ENCODE measurements at regions of chr3 and their contacts with region 1.

Region 1: GRCh38 chr3:122055215-122055614 is at the start of gene CD86:
- DNase-seq: peak; percentile 70
- ATAC-seq: peak; percentile 82
- H3K4me3 ChIP-seq: peak within 1 kb of the TSS; percentile 30 to 70 (median 54)
- H3K4me3 Mint-ChIP-seq: peak within 1 kb of the TSS; percentile 83
- H3K27ac ChIP-seq: peak within 1 kb of the TSS in 1 of 2 donors; percentile 33
- H3K27ac Mint-ChIP-seq: peak within 1 kb of the TSS; percentile 70
- H3K4me1 ChIP-seq: peaks cover 24 to 26% of the 10 kb centered on the region in 2 donors
- H3K4me1 Mint-ChIP-seq: peaks cover 31% of the 10 kb centered on the region
- H3K27me3 ChIP-seq: no peaks in the 10 kb centered on the region
- H3K27me3 Mint-ChIP-seq: no peaks in the 10 kb centered on the region
- CTCF ChIP-seq: no peak
- total RNA-seq, gene CD86: 31.5 and 37.6 TPM in 2 replicates

Region 2: GRCh38 chr3:121995161-121996137 is 59.8 kb before region 1 on chr3:
- CTCF ChIA-PET with region 1: interaction called, 27 read pairs
- POLR2A ChIA-PET with region 1: no interaction called
- intact Hi-C with region 1: loop called (anchors 1 kb)
- DNase-seq: peak; percentile 82
- ATAC-seq: peak; percentile 84
- H3K4me3 ChIP-seq: peak overlapping the region in 2 of 5 experiments; percentile 23 to 29
- H3K4me3 Mint-ChIP-seq: peak overlapping the region; percentile 65
- H3K27ac ChIP-seq: peak overlapping the region; percentile 73 to 83
- H3K27ac Mint-ChIP-seq: peak overlapping the region; percentile 92
- H3K4me1 ChIP-seq: peaks cover 83 to 84% of the 10 kb centered on the region in 2 donors
- H3K4me1 Mint-ChIP-seq: peaks cover 84% of the 10 kb centered on the region
- H3K27me3 ChIP-seq: no peaks in the 10 kb centered on the region
- H3K27me3 Mint-ChIP-seq: no peaks in the 10 kb centered on the region
- CTCF ChIP-seq: no peak

Region 3: GRCh38 chr3:122014741-122015140 is 40.5 kb before region 1 on chr3:
- CTCF ChIA-PET with region 1: interaction called, 3 read pairs
- POLR2A ChIA-PET with region 1: no interaction called
- intact Hi-C with region 1: loop called (anchors 1 kb)
- DNase-seq: peak; percentile 67
- ATAC-seq: peak; percentile 97
- H3K4me3 ChIP-seq: no peak overlapping the region
- H3K4me3 Mint-ChIP-seq: no peak overlapping the region
- H3K27ac ChIP-seq: no peak overlapping the region
- H3K27ac Mint-ChIP-seq: no peak overlapping the region
- H3K4me1 ChIP-seq: peaks cover 8 to 12% of the 10 kb centered on the region in 2 donors
- H3K4me1 Mint-ChIP-seq: peaks cover 38% of the 10 kb centered on the region
- H3K27me3 ChIP-seq: no peaks in the 10 kb centered on the region
- H3K27me3 Mint-ChIP-seq: no peaks in the 10 kb centered on the region
- CTCF ChIP-seq: no peak

Region 4: GRCh38 chr3:122067588-122068240 is 12.5 kb after region 1 on chr3:
- CTCF ChIA-PET with region 1: interaction called, 13 read pairs
- POLR2A ChIA-PET with region 1: interaction called, 6 read pairs
- intact Hi-C with region 1: loop called (anchors 1 kb)
- DNase-seq: peak; percentile 44
- ATAC-seq: peak; percentile 46
- H3K4me3 ChIP-seq: peak overlapping the region in 2 of 5 experiments; percentile 20 to 45
- H3K4me3 Mint-ChIP-seq: peak overlapping the region; percentile 79
- H3K27ac ChIP-seq: peak overlapping the region; percentile 30 to 53
- H3K27ac Mint-ChIP-seq: peak overlapping the region; percentile 47
- H3K4me1 ChIP-seq: peaks cover 36 to 39% of the 10 kb centered on the region in 2 donors
- H3K4me1 Mint-ChIP-seq: peaks cover 53% of the 10 kb centered on the region
- H3K27me3 ChIP-seq: no peaks in the 10 kb centered on the region
- H3K27me3 Mint-ChIP-seq: no peaks in the 10 kb centered on the region
- CTCF ChIP-seq: no peak

Region 5: DNA sequence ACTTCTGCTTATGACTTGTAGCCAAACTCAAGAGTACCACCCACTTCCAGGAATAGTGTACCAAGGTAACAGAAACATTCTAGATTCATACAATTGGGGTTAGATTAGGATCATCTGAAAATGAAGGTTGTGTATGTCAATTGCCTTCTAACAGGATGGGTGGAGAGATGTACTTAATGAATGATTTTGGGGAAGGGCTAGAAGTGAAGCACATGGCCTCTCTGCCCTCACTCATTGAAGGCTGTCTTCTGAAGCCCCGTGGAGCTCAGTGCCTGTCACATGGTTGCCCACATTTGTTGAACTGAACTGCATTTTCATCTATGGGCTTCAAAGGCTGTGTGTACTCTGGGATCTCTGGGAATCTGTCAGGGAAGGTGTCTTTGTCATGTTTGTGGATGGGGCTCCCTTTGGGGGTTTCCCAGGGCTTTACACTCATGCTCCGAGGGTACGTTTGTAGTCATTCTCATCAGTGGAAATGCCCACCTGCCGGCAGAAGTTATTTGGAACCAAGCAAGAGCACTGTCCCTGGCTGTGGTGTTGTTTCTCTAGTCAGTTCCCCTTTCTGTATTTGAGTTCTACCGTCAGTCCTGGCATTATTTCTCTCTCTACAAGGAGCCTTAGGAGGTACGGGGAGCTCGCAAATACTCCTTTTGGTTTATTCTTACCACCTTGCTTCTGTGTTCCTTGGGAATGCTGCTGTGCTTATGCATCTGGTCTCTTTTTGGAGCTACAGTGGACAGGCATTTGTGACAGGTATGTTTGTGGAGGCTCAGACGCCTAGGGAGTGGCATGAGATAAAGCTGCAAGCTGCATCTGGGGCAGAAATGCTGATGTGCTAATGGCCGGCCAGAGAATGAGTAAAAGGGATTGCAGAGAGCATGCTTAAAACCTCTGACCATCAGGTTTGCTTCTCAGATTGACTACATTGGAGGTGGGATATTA is 22.3 kb after region 1 on chr3:
- CTCF ChIA-PET with region 1: interaction called, 6 read pairs
- POLR2A ChIA-PET with region 1: interaction called, 4 read pairs
- intact Hi-C with region 1: loop called (anchors 2 kb)
- DNase-seq: peak; percentile 77
- ATAC-seq: peak; percentile 72
- H3K4me3 ChIP-seq: peak overlapping the region; percentile 44 to 95 (median 76)
- H3K4me3 Mint-ChIP-seq: peak overlapping the region; percentile 94
- H3K27ac ChIP-seq: peak overlapping the region; percentile 64 to 81
- H3K27ac Mint-ChIP-seq: peak overlapping the region; percentile 96
- H3K4me1 ChIP-seq: peaks cover 76 to 83% of the 10 kb centered on the region in 2 donors
- H3K4me1 Mint-ChIP-seq: peaks cover 90% of the 10 kb centered on the region
- H3K27me3 ChIP-seq: no peaks in the 10 kb centered on the region
- H3K27me3 Mint-ChIP-seq: no peaks in the 10 kb centered on the region
- CTCF ChIP-seq: peak; percentile 33

Region 6: DNA sequence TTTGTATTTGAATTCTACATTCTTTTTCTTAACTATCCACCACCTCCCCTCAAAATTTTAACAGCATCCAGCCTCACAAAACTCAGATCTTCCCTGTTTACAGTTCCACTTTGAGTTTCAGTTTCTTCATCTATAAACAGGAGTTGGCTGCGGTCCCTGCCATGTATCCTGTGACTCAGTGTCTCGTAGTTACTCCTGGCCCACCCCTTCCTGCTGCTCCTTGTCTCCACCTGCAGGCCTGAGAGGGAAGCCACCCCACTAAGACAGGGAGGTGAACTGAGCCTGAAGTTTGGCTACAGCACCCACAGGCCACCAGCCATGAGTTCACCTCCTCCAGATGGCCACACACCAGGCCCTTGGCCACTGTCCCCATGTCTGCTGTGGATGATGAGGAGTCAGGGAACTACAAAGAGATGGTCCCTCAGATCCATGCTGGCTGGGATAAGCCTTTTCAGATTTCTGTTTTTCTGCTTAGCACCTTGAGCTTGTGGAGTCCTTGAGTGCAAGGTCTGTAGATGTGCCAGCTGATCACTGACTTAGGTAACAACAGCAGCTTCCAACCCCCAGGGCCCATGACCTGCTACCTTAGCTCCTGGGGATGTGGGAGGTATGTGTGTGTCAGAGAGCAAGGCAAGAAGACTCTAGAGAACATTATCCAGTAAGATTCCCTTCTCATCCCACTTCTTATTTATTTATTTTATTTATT is 37.4 kb after region 1 on chr3:
- CTCF ChIA-PET with region 1: no interaction called
- POLR2A ChIA-PET with region 1: no interaction called
- intact Hi-C with region 1: loop called (anchors 5 kb)
- DNase-seq: peak; percentile 40
- ATAC-seq: peak; percentile 34
- H3K4me3 ChIP-seq: no peak overlapping the region
- H3K4me3 Mint-ChIP-seq: peak overlapping the region; percentile 74
- H3K27ac ChIP-seq: peak overlapping the region in 1 of 2 donors; percentile 60
- H3K27ac Mint-ChIP-seq: peak overlapping the region; percentile 81
- H3K4me1 ChIP-seq: peaks cover 23 to 27% of the 10 kb centered on the region in 2 donors
- H3K4me1 Mint-ChIP-seq: peaks cover 37% of the 10 kb centered on the region
- H3K27me3 ChIP-seq: no peaks in the 10 kb centered on the region
- H3K27me3 Mint-ChIP-seq: no peaks in the 10 kb centered on the region
- CTCF ChIP-seq: peak; percentile 36

Region 7: DNA sequence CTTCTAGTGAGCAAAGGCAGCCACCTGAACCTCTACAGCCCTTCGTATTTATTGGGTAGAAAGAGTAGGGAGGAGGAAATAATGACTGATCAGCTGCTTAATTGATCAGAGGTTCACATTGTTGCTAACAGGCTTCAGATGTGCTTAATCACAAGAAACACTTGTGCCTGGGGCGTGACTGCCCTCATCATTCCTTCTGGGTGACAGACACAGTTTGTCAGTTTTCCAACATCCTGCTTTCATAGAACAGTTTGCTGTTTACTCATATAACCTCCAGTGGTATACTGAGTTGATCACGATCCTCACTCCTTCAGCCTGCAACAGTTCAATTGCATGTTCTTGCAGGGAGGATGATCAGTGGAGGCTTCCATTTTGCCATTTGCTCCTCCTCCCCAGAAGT is 114.7 kb after region 1 on chr3:
- CTCF ChIA-PET with region 1: no interaction called
- POLR2A ChIA-PET with region 1: no interaction called
- intact Hi-C with region 1: no loop called
- DNase-seq: no peak
- ATAC-seq: no peak
- H3K4me3 ChIP-seq: no peak overlapping the region
- H3K4me3 Mint-ChIP-seq: no peak overlapping the region
- H3K27ac ChIP-seq: no peak overlapping the region
- H3K27ac Mint-ChIP-seq: no peak overlapping the region
- H3K4me1 ChIP-seq: no peaks in the 10 kb centered on the region
- H3K4me1 Mint-ChIP-seq: no peaks in the 10 kb centered on the region
- H3K27me3 ChIP-seq: peaks cover 0 to 6% (median 0%) of the 10 kb centered on the region in 4 experiments
- H3K27me3 Mint-ChIP-seq: peaks cover 7% of the 10 kb centered on the region
- CTCF ChIP-seq: no peak

Region 8: DNA sequence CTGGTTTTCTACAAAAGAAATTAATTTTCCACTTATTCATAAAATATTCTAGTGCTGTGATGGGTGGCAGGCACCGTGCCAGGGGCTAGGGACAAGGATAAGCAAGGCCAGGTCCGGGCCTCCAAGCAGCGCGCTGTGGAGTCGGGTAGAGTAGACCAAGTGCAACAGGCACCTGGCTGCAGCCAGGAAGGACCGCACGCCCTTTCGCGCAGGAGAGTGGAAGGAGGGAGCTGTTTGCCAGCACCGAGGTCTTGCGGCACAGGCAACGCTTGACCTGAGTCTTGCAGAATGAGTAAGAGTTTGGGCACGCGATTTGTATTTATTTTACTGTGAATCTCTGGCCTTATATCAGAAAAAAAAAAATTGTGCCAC is 128.3 kb after region 1 on chr3 and contains the start of gene CASR:
- CTCF ChIA-PET with region 1: no interaction called
- POLR2A ChIA-PET with region 1: no interaction called
- intact Hi-C with region 1: no loop called
- DNase-seq: no peak
- ATAC-seq: no peak
- H3K4me3 ChIP-seq: peak within 1 kb of the TSS in 3 of 5 experiments; percentile 6 to 59 (median 37)
- H3K4me3 Mint-ChIP-seq: peak within 1 kb of the TSS; percentile 86
- H3K27ac ChIP-seq: no peak within 1 kb of the TSS
- H3K27ac Mint-ChIP-seq: no peak within 1 kb of the TSS
- H3K4me1 ChIP-seq: peaks cover 10 to 16% of the 10 kb centered on the region in 2 donors
- H3K4me1 Mint-ChIP-seq: peaks cover 11% of the 10 kb centered on the region
- H3K27me3 ChIP-seq: peaks cover 0 to 44% (median 34%) of the 10 kb centered on the region in 4 experiments
- H3K27me3 Mint-ChIP-seq: peaks cover 76% of the 10 kb centered on the region
- CTCF ChIP-seq: no peak
- total RNA-seq, gene CASR: not detected in 2 replicates

Measured in B cell (primary cell).